Dorsolateral prefrontal cortex (tissue), 120 donors: ENCODE measurements at regions of chr1 and their contacts with region 1.

Region 1: GRCh38 chr1:8671306-8671917 is 146.0 kb downstream of the RERE start:
- DNase-seq: peak in 2 of 10 donors; percentile 29 to 67
- H3K4me3 ChIP-seq: peak overlapping the region in 13 of 59 donors; percentile 13 to 34 (median 25)
- H3K27ac ChIP-seq: peak overlapping the region in 16 of 59 donors; percentile 2 to 52 (median 36)
- H3K27me3 ChIP-seq: no peaks in the 10 kb centered on the region
- CTCF ChIP-seq: peak; percentile 67 to 96 (median 86)

Region 2: GRCh38 chr1:8580566-8580965 is 90.8 kb before region 1 on chr1:
- intact Hi-C with region 1: loop called in 1 of 2 experiments (anchors 5 kb)
- DNase-seq: no peak
- H3K4me3 ChIP-seq: no peak overlapping the region
- H3K27ac ChIP-seq: no peak overlapping the region
- H3K27me3 ChIP-seq: no peaks in the 10 kb centered on the region
- CTCF ChIP-seq: no peak

Region 3: GRCh38 chr1:8629241-8630091 is 41.9 kb before region 1 on chr1:
- intact Hi-C with region 1: loop called in 1 of 2 experiments (anchors 5 kb)
- DNase-seq: peak in 1 of 10 donors; percentile 53
- H3K4me3 ChIP-seq: peak overlapping the region in 55 of 59 donors; percentile 0 to 61 (median 28)
- H3K27ac ChIP-seq: peak overlapping the region; percentile 21 to 97 (median 90)
- H3K27me3 ChIP-seq: no peaks in the 10 kb centered on the region
- CTCF ChIP-seq: peak in 4 of 56 donors; percentile 4 to 15 (median 10)